Vagina (tissue), 2 donors: ENCODE measurements at regions of chr4 and their contacts with region 1.

Region 1: DNA sequence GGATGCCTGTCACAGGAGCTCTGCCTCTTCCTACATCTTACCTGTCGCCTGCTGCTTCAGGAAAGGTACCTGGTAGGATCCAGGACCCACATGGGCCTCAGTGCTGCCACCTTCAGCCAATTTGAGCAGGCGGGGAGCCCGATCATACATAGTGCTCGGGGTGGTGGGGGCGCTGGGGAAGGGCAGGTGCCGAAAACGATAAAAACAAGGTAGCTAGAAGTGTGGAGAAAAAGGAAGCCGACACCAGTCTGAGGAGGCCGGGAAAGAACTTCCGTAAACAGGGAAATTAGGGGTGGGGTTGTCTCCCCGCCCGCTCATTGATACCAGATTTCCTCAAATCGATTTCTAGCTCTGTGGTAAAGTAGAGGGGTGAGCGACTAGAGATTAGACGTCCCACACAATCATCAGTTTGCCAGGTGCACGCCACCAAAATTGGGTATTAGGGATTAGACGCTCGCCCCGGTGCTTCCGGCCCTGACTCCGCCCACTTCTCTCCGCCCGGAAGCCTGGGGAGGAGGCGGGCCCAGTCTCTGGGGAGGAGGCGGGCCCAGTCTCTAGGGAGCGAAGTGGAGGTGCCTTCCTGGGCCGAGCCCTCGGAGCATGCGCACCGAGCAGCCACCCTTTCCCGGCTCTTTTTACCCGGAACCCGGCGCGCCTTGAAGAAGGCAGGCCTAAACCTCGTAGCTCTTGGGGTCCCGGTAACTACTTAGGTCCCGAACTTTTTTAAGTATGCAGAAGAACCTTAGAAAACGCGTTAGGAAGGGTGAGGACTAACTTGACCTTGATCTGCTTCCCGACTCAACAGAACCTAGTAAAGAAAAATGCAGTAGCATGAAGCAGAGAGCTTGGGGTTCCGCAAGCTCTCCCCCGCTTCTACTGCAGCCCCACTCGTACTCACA is at the start of gene STPG2:
- DNase-seq: no peak
- H3K4me3 ChIP-seq: peak within 1 kb of the TSS; percentile 60 to 69
- H3K27ac ChIP-seq: peak within 1 kb of the TSS; percentile 84
- H3K4me1 ChIP-seq: peaks cover 5% of the 10 kb centered on the region
- H3K27me3 ChIP-seq: no peaks in the 10 kb centered on the region
- CTCF ChIP-seq: peak in 1 of 3 experiments; percentile 16
- POLR2A ChIP-seq: no peak
- total RNA-seq, gene STPG2: not detected

Region 2: DNA sequence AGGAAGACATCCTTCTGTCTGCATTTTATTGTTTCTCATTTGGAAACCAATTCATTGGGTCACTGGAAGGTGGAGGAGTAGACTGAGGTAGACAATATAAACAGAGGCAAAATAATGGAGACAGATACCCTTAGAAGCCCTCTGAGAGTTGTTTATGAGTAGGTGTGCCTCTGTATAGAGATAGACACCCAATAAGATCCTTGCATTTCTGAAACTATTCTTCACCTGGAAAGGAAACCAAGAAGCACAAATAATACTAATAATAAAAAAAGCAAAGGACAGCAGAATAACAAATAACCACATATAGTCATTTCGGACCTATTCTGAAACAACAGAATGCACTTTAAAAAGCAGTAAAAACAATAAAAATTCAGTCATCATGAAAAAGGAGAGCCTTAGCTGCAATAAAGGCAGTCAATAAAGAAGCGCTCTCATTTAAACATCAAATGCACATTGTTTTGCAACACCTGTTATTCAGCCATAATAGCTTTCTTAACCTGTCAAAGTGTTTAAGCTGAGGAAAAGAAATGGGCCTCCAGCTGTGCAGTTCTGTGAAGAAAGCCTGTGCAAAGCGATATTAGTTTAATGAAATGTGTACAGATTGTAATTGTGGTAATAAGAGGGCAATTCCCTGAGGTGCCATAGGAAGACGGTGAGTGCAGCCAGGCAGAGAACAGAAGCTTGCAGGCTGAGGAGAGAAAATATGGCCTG is 904.1 kb before region 1 on chr4:
- intact Hi-C with region 1: no loop called
- DNase-seq: no peak
- H3K4me3 ChIP-seq: no peak overlapping the region
- H3K27ac ChIP-seq: no peak overlapping the region
- H3K4me1 ChIP-seq: no peaks in the 10 kb centered on the region
- H3K27me3 ChIP-seq: no peaks in the 10 kb centered on the region
- CTCF ChIP-seq: no peak
- POLR2A ChIP-seq: no peak

Region 3: GRCh38 chr4:98260579-98261290 is 117.5 kb after region 1 on chr4:
- intact Hi-C with region 1: loop called (anchors 5 kb)
- DNase-seq: peak in 1 of 2 donors; percentile 93
- H3K4me3 ChIP-seq: peak overlapping the region; percentile 75 to 86
- H3K27ac ChIP-seq: peak overlapping the region; percentile 98
- H3K4me1 ChIP-seq: peaks cover 25% of the 10 kb centered on the region
- H3K27me3 ChIP-seq: no peaks in the 10 kb centered on the region
- CTCF ChIP-seq: no peak
- POLR2A ChIP-seq: peak in 1 of 2 donors; percentile 96